Activated CD4-positive, alpha-beta T cell treated with anti-CD3 and anti-CD28 coated beads, Interleukin-2, amount 10 ng/mL, durations not matched to agents 24 days and 14 days (primary cell): ENCODE measurements at regions of chr11 and their contacts with region 1.

Region 1: DNA sequence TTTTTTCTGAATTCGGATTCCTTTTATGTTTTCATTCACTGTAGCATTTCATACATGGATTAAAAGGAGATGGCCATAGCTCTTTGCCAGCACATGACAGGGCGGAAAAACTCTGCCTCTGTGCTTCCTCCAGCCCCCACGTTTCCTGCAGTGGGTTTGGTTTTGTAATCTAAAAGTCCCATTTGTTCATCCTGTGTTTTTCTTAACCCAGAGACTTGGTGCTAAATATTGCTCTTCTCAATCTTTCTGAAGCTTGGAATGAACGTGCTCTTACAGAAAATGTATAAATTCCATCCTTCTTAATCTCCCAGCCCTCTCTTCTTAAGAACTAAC is 89.9 kb downstream of the PPP6R3 start:
- DNase-seq: peak; percentile 68
- H3K4me3 Mint-ChIP-seq: peak overlapping the region; percentile 81
- H3K27ac Mint-ChIP-seq: peak overlapping the region; percentile 96
- H3K4me1 Mint-ChIP-seq: peaks cover 57% of the 10 kb centered on the region
- H3K27me3 Mint-ChIP-seq: no peaks in the 10 kb centered on the region

Region 2: DNA sequence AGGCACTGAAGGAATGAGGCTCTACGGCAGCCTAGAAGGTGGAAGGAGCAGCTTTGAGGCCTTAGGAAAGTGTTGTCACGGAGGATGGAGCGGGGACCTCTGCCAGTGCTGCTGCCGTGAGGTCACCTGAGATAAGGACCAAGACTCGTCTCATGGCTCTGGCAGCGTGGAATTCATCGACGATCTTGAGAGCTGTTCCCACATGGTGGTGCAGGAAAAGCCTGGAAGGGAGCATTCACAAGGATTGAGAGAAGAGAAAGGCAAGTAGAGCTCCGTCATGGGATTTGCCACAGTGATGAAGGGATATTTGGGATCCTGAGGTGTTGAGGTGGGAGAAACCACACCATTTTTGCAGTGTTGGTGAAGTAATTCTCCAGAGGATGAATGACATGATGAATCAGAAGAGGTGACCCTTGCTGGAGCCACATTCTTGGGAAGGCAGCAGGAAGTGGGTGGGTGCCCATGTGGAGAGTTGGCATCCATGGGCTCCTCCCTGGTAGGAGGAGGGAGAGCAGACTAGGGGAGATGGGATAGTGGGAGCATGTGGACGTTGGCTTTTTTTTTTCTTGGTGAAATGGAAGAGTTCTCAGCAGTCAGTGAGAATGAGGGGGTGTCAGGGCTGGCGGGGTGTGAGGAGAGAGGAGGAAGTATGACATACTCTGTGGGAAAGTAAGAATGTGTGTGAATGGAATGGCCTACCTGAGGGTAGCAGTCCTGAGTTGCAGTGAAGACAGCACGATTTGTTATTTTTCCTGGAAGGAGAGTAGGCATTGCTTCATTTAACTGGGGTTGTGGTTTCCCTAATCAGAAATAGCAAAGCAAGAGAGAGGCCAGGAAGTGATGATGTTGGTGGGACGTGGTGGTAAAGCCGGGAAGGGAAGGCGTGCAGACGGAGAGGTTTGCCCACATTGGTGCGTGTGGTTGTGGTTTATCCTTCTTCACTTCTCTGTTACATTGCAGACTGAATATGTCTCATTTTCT is 78.8 kb before region 1 on chr11:
- intact Hi-C with region 1: loop called (anchors 2 kb)
- DNase-seq: peak; percentile 86
- H3K4me3 Mint-ChIP-seq: peak overlapping the region; percentile 86
- H3K27ac Mint-ChIP-seq: peak overlapping the region; percentile 89
- H3K4me1 Mint-ChIP-seq: peaks cover 65% of the 10 kb centered on the region
- H3K27me3 Mint-ChIP-seq: no peaks in the 10 kb centered on the region

Region 3: DNA sequence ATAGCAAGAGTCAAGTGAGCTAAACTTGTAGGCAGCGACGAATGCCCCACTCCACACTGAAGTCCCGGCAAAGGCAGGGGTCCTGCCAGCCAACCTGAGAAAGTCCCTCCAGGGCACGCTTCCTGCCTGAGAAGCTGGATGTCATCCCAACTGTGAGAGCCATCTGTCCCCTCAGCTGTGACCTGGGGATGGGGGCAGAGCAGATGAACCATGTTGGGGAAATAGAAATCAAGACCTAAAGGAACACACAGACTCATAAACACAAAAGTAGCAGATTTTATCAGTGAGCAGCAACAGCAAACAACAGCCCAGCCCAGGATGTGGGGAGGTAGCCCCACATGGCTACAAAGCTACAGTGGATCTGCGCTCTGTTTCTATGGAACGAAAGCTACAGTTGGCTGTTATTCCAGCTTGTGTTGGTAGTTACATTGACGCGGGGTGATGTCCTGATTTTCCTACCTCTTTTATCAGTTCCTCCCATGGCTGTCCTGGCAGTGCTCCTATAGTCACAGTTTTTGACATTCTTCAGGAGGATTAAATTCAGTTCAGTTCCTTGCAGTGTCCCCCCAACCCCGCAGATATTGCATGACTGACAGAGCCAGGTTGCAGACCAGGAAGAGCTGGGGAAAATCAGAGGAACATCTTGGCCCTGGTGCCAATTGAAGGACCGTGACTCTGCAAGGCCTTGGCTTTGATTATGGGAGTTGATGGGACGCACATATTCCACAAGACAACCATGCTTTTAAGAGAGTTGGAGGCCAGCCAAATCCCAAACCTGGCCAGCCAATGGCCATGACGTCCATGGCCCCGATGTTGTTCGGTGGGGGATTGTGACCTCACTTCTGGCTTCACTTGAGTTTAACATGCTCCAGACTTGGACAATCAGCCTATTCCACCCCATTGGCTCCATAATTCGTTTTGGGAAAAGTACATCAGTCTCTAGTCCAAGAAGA is 415.7 kb after region 1 on chr11:
- intact Hi-C with region 1: no loop called
- DNase-seq: peak; percentile 78
- H3K4me3 Mint-ChIP-seq: peak overlapping the region; percentile 3
- H3K27ac Mint-ChIP-seq: peak overlapping the region; percentile 13
- H3K4me1 Mint-ChIP-seq: peaks cover 12% of the 10 kb centered on the region
- H3K27me3 Mint-ChIP-seq: no peaks in the 10 kb centered on the region